A549 (cell line): ENCODE measurements at regions of chr1 and their contacts with region 1.

Region 1: DNA sequence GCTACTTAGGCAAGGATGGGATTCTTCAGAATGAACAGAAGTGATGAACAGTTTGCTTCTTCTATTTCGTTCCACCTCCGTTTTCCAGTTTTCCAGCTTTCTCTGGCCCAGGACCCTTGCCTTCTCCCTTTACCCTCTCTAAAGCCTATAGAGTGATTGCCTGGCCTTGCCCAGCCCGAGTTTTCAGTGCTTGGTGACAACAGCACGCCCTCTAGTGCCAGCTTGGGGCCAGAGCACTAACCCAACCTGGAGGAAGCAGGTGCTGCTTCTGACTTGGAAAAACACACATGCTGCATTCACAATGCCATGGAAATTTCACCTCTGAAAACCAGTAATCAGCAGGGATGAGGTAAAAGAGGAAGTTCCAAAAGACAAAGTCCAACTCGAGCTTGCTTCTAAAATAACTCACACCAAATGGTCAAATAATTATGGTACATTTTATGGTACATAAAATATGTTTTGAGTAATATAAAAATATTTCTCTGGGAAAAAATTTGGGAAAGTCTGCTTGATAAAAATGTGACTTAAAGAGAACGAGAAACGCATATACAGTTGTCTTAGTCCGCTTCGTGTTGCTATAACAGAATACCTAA is 26.1 kb downstream of the UBE2T start:
- DNase-seq: peak; percentile 80 to 89
- ATAC-seq: peak; percentile 85 to 96; a peak in 5 of 6 replicates
- H3K4me3 ChIP-seq: no peak overlapping the region
- H3K27ac ChIP-seq: peak overlapping the region in 1 of 2 experiments; percentile 26; a peak in 2 of 6 replicates
- H3K4me1 ChIP-seq: peaks cover 5% of the 10 kb centered on the region; the same call in 1 of the 3 replicates
- CTCF ChIP-seq: peak; percentile 98
- EP300 ChIP-seq: no peak
- POLR2A ChIP-seq: no peak
- RAD21 ChIP-seq: peak; percentile 98 to 99

Region 2: DNA sequence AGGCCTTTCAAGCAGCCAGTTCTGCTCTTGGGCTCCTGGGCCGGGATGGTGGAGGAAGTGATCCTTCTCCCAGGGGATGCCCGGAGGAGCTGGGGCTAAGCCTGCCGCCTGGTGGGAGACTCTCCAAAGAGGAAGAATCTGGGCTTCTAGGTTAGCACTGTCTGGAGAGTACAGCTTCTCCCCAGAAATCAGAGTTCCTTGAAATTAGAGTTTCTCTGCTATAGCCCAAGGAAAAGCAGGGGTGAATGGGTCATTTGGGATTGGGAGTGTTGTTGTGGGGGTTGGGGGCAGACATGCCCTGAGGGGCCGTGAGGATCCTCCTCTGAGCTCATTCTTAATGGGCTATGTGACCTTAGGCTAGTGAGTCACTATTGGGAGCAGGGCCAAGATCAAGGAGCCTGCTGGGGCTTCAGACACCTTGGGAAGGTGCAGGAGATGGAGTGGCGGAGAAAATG is 115.5 kb before region 1 on chr1:
- CTCF ChIA-PET with region 1: interaction called, 93 read pairs
- POLR2A ChIA-PET with region 1: no interaction called
- DNase-seq: peak; percentile 53 to 66
- ATAC-seq: peak; percentile 26 to 66; a peak in 4 of 6 replicates
- H3K4me3 ChIP-seq: no peak overlapping the region
- H3K27ac ChIP-seq: peak overlapping the region; percentile 74 to 80
- H3K4me1 ChIP-seq: peaks cover 26% of the 10 kb centered on the region
- CTCF ChIP-seq: no peak
- EP300 ChIP-seq: no peak
- POLR2A ChIP-seq: no peak
- RAD21 ChIP-seq: no peak

Region 3: GRCh38 chr1:202230939-202231645 is 84.6 kb before region 1 on chr1:
- CTCF ChIA-PET with region 1: interaction called, 70 read pairs
- POLR2A ChIA-PET with region 1: interaction called, 4 read pairs
- DNase-seq: no peak
- ATAC-seq: no peak
- H3K4me3 ChIP-seq: no peak overlapping the region
- H3K27ac ChIP-seq: peak overlapping the region in 1 of 2 experiments; percentile 3; a peak in 2 of 6 replicates
- H3K4me1 ChIP-seq: peaks cover 12% of the 10 kb centered on the region
- CTCF ChIP-seq: no peak
- EP300 ChIP-seq: no peak
- POLR2A ChIP-seq: no peak
- RAD21 ChIP-seq: no peak

Region 4: DNA sequence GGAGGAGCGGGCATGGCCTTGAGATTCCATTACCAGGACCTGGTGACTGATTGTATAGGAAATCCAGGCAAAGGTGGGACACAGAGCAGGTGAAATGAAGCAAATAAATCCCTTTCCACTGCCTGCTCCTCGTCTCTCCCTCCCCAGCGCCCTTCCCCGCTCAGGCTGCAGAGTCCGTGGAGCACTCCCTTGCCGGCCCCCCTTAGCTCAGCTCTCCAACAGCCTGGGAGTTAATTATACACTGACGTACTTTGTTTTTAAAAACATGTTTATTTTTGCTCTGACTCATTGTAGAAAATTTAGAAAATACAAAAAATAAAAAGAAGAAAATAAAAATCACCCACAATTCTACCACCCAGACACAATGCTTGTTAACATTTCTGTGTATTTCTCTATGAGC is 60.3 kb before region 1 on chr1:
- CTCF ChIA-PET with region 1: interaction called, 11 read pairs
- POLR2A ChIA-PET with region 1: no interaction called
- DNase-seq: no peak
- ATAC-seq: no peak
- H3K4me3 ChIP-seq: no peak overlapping the region
- H3K27ac ChIP-seq: no peak overlapping the region
- H3K4me1 ChIP-seq: 0 out of 3 replicates have a peak, but pooled peaks cover 5% of the 10 kb centered on the region
- CTCF ChIP-seq: no peak
- EP300 ChIP-seq: no peak
- POLR2A ChIP-seq: no peak
- RAD21 ChIP-seq: no peak

Region 5: DNA sequence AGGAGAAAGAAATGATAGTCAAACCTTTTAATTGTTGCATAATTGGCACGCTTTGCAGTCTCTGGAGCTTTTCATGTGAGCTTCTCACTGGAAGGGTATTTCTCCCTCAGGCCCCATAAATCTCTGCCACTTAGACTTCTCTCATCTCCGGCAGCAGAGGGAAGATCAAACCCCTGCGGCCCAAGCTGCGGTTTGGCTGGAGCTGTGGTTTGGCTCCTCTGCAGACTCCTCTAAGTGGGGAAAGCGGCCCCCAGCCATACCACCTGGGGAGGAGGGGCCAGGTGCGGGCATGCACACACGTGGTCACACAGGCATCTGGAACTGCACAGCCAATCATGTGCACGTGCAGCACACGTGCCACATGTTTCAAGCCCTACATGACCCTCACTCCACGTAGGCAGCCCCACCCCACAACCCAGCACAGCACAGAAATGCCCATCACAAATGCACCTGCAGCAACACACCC is 32.3 kb before region 1 on chr1:
- CTCF ChIA-PET with region 1: interaction called, 19 read pairs
- POLR2A ChIA-PET with region 1: no interaction called
- DNase-seq: peak; percentile 28 to 33
- ATAC-seq: peak; percentile 52 to 62
- H3K4me3 ChIP-seq: no peak overlapping the region; the same call in 2 of the 3 replicates
- H3K27ac ChIP-seq: peak overlapping the region; percentile 74 to 82
- H3K4me1 ChIP-seq: peaks cover 58% of the 10 kb centered on the region
- CTCF ChIP-seq: no peak
- EP300 ChIP-seq: peak in 1 of 2 experiments; percentile 57; a peak in 1 of 5 replicates
- POLR2A ChIP-seq: no peak
- RAD21 ChIP-seq: no peak

Region 6: DNA sequence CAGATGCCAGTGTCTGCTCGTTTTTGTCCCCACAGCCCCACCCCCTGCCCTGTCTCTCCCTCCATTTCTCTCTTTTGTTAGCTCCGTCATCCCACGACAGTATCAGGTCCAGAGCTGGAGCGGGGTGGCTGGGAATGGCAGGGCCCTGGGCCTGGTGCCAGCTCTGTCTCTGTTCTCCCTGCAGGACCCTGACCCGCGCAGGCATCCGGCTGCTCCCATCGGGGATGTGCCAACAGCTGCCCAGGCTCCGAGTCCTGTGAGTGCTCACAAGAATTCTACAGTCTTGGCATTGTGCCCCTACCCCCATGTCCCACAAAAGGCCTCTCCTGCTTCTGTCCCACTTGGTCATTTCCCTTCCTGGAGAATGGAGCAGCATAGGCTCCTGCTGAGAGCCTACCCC is 11.3 kb before region 1 on chr1:
- CTCF ChIA-PET with region 1: interaction called, 74 read pairs
- POLR2A ChIA-PET with region 1: no interaction called
- DNase-seq: no peak
- ATAC-seq: no peak
- H3K4me3 ChIP-seq: no peak overlapping the region
- H3K27ac ChIP-seq: no peak overlapping the region
- H3K4me1 ChIP-seq: no peaks in the 10 kb centered on the region
- CTCF ChIP-seq: no peak
- EP300 ChIP-seq: no peak
- POLR2A ChIP-seq: no peak
- RAD21 ChIP-seq: no peak